ENCODE measurements at regions of chr18 and their contacts with region 1.

Region 1: DNA sequence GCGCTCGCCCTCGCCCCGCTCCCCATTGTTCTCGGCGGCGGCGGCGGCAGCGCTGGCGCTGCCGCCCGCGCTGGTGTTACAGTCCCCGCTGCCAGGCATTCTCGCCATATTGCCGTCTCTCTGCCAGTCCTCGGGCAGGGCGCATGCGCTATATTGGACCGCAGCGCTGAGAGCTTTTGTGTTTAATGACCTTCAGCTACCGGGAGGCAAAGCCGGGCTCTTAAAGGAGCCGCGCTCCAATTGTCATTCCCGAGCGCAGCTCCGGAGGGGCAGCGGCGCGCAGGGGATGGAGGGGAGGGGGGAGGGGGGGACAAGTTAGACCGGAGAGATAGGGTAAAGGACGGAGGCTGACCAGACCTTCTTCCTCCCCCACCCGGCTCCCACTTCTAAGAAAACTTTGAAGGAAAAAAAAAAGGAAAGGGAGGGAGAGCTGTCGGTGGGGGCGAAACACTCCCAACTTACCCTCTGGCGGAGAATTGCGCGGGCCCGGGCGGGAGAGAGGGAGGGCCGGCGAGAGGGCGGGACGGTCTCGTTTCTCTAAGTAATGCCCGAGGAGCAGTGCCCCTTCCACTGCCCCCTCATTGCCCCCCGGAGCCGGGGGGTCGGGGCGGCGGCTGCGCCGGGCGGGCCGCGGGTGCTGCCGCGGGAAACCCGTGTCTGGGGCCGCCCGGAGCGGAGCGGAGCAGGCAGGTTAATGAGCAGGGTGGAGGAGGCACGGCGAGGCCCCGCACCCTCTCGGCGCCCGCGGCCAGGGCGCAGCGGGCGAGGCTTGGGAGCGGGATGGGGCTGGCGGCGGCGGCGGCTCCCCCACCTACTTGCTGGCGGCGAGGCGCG is at the start of gene KCTD1:
- DNase-seq: peak; percentile 90
- H3K4me3 ChIP-seq: peak within 1 kb of the TSS; percentile 60 to 75 (median 75)
- H3K27ac ChIP-seq: peak within 1 kb of the TSS; percentile 52 to 77 (median 58)
- H3K4me1 ChIP-seq: peaks cover 37 to 40% of the 10 kb centered on the region in 2 donors
- H3K27me3 ChIP-seq: no peaks in the 10 kb centered on the region
- CTCF ChIP-seq: no peak
- POLR2A ChIP-seq: peak in 1 of 2 donors; percentile 62
- total RNA-seq, gene KCTD1: 25.9 to 66.0 (median 34.2) TPM

Region 2: DNA sequence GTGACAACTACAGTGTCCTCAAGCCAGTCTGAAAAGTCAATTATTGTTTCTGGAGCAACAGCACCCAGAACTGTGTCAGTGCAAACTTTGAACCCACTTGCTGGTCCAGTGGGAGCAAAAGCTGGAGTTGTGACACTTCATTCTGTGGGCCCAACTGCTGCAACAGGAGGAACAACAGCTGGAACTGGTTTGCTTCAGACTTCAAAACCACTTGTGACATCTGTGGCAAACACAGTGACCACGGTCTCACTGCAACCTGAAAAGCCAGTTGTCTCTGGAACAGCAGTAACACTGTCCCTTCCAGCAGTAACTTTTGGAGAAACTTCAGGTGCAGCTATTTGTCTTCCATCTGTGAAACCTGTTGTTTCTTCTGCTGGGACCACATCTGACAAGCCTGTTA is 262.6 kb before region 1 on chr18:
- intact Hi-C with region 1: no loop called
- DNase-seq: no peak
- H3K4me3 ChIP-seq: no peak overlapping the region
- H3K27ac ChIP-seq: no peak overlapping the region
- H3K4me1 ChIP-seq: no peaks in the 10 kb centered on the region
- H3K27me3 ChIP-seq: no peaks in the 10 kb centered on the region
- CTCF ChIP-seq: no peak
- POLR2A ChIP-seq: no peak

Region 3: DNA sequence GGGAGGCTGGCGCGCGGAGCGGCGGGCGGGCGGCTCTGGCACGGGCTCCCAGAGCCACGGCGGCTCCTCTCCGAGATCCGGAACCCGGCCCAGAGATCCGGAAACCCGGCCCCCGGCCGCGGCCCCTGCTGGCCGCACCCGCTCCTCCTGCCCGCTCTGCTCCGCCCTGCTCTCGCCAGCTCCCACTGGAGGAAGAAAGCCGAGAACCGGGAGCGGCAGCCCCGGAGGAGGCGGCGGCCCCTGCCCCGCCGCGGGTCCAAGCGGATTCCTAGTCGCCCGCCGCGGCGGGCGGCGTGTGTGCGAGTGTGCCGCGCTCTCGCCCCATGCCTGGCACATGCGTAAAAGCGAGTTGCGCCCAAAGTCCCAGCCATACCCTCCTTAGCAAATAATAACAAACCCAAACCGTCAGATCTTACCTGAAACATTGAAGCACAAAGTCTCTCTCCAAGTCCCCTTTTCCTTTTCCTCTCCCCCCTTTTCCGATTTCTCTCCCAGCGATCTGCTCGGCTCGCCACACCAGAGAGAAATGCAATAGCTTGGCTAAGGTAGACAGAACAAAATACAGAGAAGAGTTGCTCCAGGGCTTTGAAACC is 108.4 kb after region 1 on chr18:
- intact Hi-C with region 1: loop called (anchors 5 kb)
- DNase-seq: peak; percentile 79 to 83
- H3K4me3 ChIP-seq: peak overlapping the region; percentile 60 to 73 (median 62)
- H3K27ac ChIP-seq: peak overlapping the region; percentile 92 to 94 (median 93)
- H3K4me1 ChIP-seq: peaks cover 0 to 23% of the 10 kb centered on the region in 2 donors
- H3K27me3 ChIP-seq: no peaks in the 10 kb centered on the region
- CTCF ChIP-seq: peak in 3 of 6 experiments; percentile 13 to 33 (median 27)
- POLR2A ChIP-seq: peak; percentile 38 to 86

Region 4: GRCh38 chr18:26710470-26711096 is 161.9 kb after region 1 on chr18:
- intact Hi-C with region 1: no loop called
- DNase-seq: no peak
- H3K4me3 ChIP-seq: no peak overlapping the region
- H3K27ac ChIP-seq: no peak overlapping the region
- H3K4me1 ChIP-seq: peaks cover 19 to 20% of the 10 kb centered on the region in 2 donors
- H3K27me3 ChIP-seq: no peaks in the 10 kb centered on the region
- CTCF ChIP-seq: no peak
- POLR2A ChIP-seq: no peak

Region 5: DNA sequence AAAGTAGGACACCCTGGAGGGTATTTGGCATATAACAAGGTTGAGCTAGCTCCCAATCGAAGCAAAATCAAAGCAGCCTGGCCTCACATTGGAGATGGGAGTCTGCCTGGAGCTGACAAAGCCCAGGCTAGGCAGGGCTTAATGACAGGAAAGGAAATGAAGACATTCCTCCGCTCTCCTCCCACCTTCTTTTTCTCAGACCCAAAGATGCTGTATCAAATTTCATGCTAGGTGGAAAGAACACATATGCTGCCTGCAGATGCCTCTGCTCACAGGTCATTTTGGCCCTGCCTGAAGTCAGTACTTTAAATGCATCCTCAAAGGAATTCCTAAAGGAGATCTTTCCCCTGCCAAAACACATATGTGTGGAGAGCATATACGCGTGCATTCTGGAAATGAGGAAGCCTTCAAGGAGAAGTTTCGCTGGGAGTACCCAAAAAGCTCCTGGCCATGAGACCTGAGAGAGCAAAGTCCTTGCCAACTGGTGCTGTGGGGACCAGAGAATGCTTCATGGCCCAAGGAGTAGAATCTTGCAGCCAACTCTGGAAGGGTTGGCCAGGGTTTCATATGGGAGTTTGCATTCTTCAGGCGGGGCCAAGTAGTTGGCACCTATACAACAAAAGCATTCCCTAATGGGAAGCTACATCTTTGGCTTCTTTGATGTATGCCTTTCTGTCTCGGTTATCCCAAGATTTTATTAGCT is 228.9 kb after region 1 on chr18:
- intact Hi-C with region 1: no loop called
- DNase-seq: no peak
- H3K4me3 ChIP-seq: no peak overlapping the region
- H3K27ac ChIP-seq: no peak overlapping the region
- H3K4me1 ChIP-seq: no peaks in the 10 kb centered on the region
- H3K27me3 ChIP-seq: no peaks in the 10 kb centered on the region
- CTCF ChIP-seq: no peak
- POLR2A ChIP-seq: no peak

Region 6: DNA sequence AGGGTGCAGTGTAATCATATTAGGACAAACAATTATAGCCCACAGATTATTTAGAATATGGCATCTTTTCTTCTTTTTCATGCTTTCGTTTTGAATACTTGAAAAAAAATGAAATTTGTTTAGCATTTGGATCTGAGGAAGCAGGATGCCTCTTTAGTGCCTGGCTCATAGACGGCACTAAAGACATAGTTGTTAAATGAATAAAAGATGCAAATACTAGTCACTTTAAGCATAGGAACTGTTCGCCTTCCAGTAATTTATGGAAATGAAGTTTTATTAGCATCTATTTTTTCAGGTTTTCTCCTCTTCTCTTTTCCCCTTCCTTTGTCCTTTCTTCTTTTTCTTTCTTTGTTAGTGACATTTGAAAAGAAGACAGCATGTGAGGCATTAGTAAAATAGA is 556.1 kb after region 1 on chr18:
- intact Hi-C with region 1: no loop called
- DNase-seq: no peak
- H3K4me3 ChIP-seq: no peak overlapping the region
- H3K27ac ChIP-seq: no peak overlapping the region
- H3K4me1 ChIP-seq: no peaks in the 10 kb centered on the region
- H3K27me3 ChIP-seq: no peaks in the 10 kb centered on the region
- CTCF ChIP-seq: no peak
- POLR2A ChIP-seq: no peak